ENCODE measurements at regions of chr6 and their contacts with region 1.

Region 1: DNA sequence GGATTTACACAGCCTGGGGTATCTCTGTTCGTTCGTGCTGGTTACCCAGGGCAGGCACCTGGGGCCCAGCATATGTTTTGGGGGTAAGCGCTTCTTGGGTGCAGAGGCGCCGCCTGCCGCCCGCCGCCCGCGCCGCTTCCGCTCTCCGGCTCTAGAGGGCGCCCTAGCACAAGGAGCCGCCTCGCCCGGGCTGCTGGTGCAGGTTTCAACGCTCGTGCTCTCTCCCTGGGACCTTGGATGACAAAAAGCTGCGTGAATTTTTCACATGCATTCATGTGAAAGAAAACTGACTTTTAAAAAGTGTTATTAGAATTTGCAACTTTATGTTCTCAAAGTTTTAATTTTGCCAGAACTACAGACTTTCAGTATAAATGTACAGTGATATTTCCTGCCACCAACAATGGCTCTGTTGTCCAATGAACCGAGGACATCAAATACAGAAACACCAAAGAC is 32.5 kb downstream of the PRR18 start:
- DNase-seq: peak; percentile 63
- H3K4me3 Mint-ChIP-seq: no peak overlapping the region
- H3K27ac Mint-ChIP-seq: no peak overlapping the region
- H3K4me1 Mint-ChIP-seq: no peaks in the 10 kb centered on the region
- H3K27me3 Mint-ChIP-seq: peaks cover 16% of the 10 kb centered on the region
- CTCF ChIP-seq: peak; percentile 96

Region 2: DNA sequence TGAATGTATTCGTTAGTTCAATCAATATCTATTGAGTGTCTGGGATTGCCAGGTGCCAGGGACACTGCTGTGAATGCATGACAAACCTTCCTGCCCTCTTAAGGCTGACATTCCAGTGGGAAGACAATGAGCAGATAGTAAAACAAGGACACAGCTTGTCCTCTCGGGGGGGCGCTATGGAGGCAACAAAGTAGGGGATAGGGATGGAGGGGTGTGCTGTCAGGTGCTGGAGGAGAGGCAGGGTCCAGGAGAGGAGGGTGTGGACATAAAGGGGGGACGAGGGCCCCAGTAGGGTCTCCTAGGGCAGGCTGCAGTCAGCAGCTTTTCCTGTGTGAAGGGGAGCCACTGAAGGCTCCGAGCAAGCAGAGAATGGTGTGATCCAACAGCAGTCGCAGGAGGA is 414.5 kb before region 1 on chr6:
- CTCF ChIA-PET with region 1: no interaction called
- POLR2A ChIA-PET with region 1: no interaction called
- intact Hi-C with region 1: no loop called
- DNase-seq: no peak
- H3K4me3 Mint-ChIP-seq: no peak overlapping the region
- H3K27ac Mint-ChIP-seq: no peak overlapping the region
- H3K4me1 Mint-ChIP-seq: no peaks in the 10 kb centered on the region
- H3K27me3 Mint-ChIP-seq: peaks cover 26% of the 10 kb centered on the region
- CTCF ChIP-seq: no peak

Region 3: GRCh38 chr6:165884813-165885765 is 390.7 kb before region 1 on chr6:
- CTCF ChIA-PET with region 1: no interaction called
- POLR2A ChIA-PET with region 1: no interaction called
- intact Hi-C with region 1: loop called (anchors 10 kb)
- DNase-seq: peak; percentile 67
- H3K4me3 Mint-ChIP-seq: no peak overlapping the region
- H3K27ac Mint-ChIP-seq: no peak overlapping the region
- H3K4me1 Mint-ChIP-seq: no peaks in the 10 kb centered on the region
- H3K27me3 Mint-ChIP-seq: no peaks in the 10 kb centered on the region
- CTCF ChIP-seq: peak; percentile 88

Region 4: DNA sequence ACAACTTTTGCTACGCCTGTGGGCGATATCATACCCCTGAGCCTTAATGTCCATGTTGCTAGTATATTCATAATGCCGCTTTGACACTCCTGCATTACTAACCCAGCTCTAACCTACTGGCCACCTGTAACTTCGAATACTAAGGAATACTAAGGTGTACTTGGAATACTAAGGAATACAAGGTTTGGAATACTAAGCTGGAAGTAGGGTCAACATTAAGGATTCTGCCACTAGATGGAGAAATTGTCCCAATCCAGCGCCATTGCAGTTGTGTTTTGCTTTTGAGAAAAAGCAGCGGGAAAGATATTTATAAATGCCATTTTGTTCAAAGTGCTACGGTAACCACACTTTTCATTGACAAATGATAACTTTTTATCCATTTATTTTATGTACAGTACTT is 118.8 kb before region 1 on chr6:
- CTCF ChIA-PET with region 1: interaction called, 7 read pairs
- POLR2A ChIA-PET with region 1: no interaction called
- intact Hi-C with region 1: loop called (anchors 5 kb)
- DNase-seq: peak; percentile 33
- H3K4me3 Mint-ChIP-seq: no peak overlapping the region
- H3K27ac Mint-ChIP-seq: no peak overlapping the region
- H3K4me1 Mint-ChIP-seq: no peaks in the 10 kb centered on the region
- H3K27me3 Mint-ChIP-seq: no peaks in the 10 kb centered on the region
- CTCF ChIP-seq: peak; percentile 44

Region 5: DNA sequence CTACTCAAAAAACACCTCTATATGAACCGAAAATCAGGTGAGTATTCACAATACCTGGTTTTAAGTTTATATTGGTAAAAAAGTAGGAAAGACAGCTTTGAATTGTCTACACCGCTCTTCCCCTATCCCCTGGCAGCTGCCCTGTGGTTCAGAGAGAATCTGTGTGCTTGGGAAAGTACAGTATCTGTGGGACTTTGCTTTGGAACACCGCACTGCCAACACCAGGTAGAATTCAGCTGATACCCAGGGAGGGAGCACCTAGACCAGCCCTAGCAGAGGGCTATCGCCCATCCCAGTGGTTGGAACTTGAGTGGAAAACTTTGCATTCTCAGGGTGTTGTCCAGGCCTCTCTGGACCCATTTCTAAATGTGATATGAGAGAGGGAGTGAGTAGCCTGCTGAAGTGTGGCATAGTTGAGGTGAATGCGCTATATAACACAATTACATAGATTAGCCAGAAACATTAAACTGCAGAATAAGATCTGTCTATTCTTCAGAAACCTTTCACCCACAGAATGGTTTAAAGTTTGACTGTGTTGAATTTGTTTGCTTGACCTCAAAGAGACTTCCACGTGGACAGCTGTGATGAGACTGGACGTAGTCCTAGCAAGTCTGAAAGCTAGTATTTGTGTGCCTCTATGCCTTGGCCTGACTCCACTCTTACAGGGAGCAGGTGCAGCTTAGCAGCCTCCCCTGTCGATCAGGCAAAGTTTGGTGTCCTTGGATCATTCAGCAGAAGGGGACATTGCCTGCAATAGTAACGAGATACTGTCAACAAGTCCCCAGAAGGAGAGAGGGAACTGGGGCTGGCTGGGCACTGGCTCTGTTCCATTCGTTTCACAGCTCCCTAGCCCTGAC is 118.5 kb after region 1 on chr6:
- CTCF ChIA-PET with region 1: interaction called, 119 read pairs
- POLR2A ChIA-PET with region 1: interaction called, 4 read pairs
- intact Hi-C with region 1: no loop called
- DNase-seq: no peak
- H3K4me3 Mint-ChIP-seq: no peak overlapping the region
- H3K27ac Mint-ChIP-seq: no peak overlapping the region
- H3K4me1 Mint-ChIP-seq: no peaks in the 10 kb centered on the region
- H3K27me3 Mint-ChIP-seq: peaks cover 9% of the 10 kb centered on the region
- CTCF ChIP-seq: no peak

Region 6: GRCh38 chr6:166402582-166403277 is 127.0 kb after region 1 on chr6:
- CTCF ChIA-PET with region 1: interaction called, 119 read pairs
- POLR2A ChIA-PET with region 1: interaction called, 4 read pairs
- intact Hi-C with region 1: loop called (anchors 1 kb)
- DNase-seq: no peak
- H3K4me3 Mint-ChIP-seq: no peak overlapping the region
- H3K27ac Mint-ChIP-seq: no peak overlapping the region
- H3K4me1 Mint-ChIP-seq: peaks cover 8% of the 10 kb centered on the region
- H3K27me3 Mint-ChIP-seq: no peaks in the 10 kb centered on the region
- CTCF ChIP-seq: no peak

Region 7: DNA sequence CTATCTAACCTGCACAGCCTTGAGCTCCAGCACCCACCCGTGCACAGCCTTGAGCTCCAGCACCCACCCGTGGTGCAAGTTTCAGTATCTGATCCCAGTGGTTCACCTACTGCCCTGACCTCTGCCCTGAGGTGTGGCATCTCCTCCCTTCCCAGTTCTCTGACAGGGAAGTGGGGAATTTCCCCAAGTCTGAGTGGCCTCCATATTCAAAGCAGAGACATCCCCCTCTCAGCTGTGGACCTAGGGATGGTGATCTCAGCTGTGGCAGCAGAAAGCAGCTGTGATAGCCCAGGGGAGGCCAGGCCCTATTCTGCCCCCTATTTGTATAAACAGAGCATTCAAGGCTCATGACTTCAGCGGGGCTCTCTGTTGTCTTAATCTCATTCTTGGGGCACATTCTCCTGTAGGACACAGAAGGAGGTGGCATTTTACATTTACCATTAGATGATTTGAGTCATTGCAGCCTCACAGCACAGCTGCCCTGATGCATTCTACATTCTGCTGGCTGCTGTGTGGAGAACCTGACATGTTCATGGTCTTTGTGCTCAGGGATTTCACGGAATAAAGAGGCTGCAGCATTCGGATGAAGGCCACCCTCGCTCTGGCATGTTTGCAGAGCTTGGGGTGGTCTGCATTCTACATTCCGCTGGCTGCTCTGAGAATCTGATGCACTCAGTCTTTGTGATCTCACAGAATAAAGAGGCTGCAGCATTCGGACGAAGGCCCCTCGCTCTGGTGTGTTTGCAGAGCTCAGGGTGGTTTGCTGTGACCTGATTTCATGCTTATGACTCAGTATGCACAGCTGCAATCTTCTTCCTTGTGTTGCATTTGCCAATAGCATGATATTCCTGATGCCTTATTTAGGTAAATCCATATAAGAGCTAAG is 865.1 kb after region 1 on chr6:
- CTCF ChIA-PET with region 1: no interaction called
- POLR2A ChIA-PET with region 1: no interaction called
- intact Hi-C with region 1: no loop called
- DNase-seq: no peak
- H3K4me3 Mint-ChIP-seq: no peak overlapping the region
- H3K27ac Mint-ChIP-seq: no peak overlapping the region
- H3K4me1 Mint-ChIP-seq: no peaks in the 10 kb centered on the region
- H3K27me3 Mint-ChIP-seq: peaks cover 66% of the 10 kb centered on the region
- CTCF ChIP-seq: no peak

Measured in MCF 10A (cell line).